ENCODE measurements at regions of chr10 and their contacts with region 1.

Region 1: DNA sequence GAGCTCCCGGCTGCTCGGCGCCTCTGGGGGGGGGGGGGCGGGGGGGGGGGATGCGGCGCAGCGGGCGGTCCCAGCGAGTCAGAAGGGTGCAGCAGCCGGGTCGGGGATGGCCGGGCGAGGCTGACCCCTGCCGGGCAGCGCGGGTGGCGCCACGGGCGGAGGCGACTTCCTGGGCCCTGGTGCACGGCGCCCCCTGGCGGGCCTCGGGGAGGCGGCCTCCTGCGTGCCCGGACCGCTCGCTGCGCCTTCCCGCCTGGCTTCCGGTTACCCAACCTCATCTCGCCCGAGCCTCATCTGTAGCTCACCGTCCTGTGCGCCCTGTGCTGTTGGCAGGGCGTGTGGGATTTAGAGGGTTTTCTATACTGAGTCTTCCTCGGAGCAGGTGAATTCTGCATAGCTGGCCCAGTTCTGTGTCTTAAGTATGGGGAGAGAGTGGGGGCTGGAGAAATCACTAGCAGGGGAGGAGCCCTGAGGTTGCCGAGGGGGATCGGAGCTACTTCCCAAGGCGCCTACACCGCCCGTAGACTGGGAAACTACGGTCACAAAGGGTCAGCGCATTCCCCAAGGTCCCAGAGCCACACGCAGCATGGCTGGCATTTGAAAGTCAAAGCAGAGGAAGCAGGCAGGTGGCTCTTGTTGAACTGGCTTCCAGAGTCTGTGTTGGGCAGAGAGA is 28.3 kb upstream of the WDFY4 start:
- DNase-seq: peak; percentile 99
- ATAC-seq: peak; percentile 93
- H3K4me3 Mint-ChIP-seq: peak overlapping the region; percentile 81
- H3K27ac Mint-ChIP-seq: no peak overlapping the region
- H3K4me1 Mint-ChIP-seq: peaks cover 48% of the 10 kb centered on the region
- H3K27me3 Mint-ChIP-seq: peaks cover 6% of the 10 kb centered on the region
- CTCF ChIP-seq: peak; percentile 97

Region 2: GRCh38 chr10:48557511-48558123 is 98.8 kb before region 1 on chr10:
- CTCF ChIA-PET with region 1: interaction called, 301 read pairs
- POLR2A ChIA-PET with region 1: interaction called, 9 read pairs
- intact Hi-C with region 1: loop called (anchors 1 kb)
- DNase-seq: no peak
- ATAC-seq: no peak
- H3K4me3 Mint-ChIP-seq: no peak overlapping the region
- H3K27ac Mint-ChIP-seq: no peak overlapping the region
- H3K4me1 Mint-ChIP-seq: peaks cover 1% of the 10 kb centered on the region
- H3K27me3 Mint-ChIP-seq: no peaks in the 10 kb centered on the region
- CTCF ChIP-seq: no peak

Region 3: GRCh38 chr10:48634198-48634983 is 22.0 kb before region 1 on chr10:
- CTCF ChIA-PET with region 1: interaction called, 15 read pairs
- POLR2A ChIA-PET with region 1: interaction called, 5 read pairs
- intact Hi-C with region 1: loop called (anchors 2 kb)
- DNase-seq: peak; percentile 67
- ATAC-seq: peak; percentile 100
- H3K4me3 Mint-ChIP-seq: peak overlapping the region; percentile 71
- H3K27ac Mint-ChIP-seq: peak overlapping the region; percentile 74
- H3K4me1 Mint-ChIP-seq: peaks cover 45% of the 10 kb centered on the region
- H3K27me3 Mint-ChIP-seq: peaks cover 17% of the 10 kb centered on the region
- CTCF ChIP-seq: no peak

Region 4: GRCh38 chr10:48708144-48708543 is 51.8 kb after region 1 on chr10:
- CTCF ChIA-PET with region 1: interaction called, 228 read pairs
- POLR2A ChIA-PET with region 1: interaction called, 5 read pairs
- intact Hi-C with region 1: no loop called
- DNase-seq: no peak
- ATAC-seq: no peak
- H3K4me3 Mint-ChIP-seq: no peak overlapping the region
- H3K27ac Mint-ChIP-seq: peak overlapping the region; percentile 30
- H3K4me1 Mint-ChIP-seq: peaks cover 82% of the 10 kb centered on the region
- H3K27me3 Mint-ChIP-seq: no peaks in the 10 kb centered on the region
- CTCF ChIP-seq: no peak

Region 5: DNA sequence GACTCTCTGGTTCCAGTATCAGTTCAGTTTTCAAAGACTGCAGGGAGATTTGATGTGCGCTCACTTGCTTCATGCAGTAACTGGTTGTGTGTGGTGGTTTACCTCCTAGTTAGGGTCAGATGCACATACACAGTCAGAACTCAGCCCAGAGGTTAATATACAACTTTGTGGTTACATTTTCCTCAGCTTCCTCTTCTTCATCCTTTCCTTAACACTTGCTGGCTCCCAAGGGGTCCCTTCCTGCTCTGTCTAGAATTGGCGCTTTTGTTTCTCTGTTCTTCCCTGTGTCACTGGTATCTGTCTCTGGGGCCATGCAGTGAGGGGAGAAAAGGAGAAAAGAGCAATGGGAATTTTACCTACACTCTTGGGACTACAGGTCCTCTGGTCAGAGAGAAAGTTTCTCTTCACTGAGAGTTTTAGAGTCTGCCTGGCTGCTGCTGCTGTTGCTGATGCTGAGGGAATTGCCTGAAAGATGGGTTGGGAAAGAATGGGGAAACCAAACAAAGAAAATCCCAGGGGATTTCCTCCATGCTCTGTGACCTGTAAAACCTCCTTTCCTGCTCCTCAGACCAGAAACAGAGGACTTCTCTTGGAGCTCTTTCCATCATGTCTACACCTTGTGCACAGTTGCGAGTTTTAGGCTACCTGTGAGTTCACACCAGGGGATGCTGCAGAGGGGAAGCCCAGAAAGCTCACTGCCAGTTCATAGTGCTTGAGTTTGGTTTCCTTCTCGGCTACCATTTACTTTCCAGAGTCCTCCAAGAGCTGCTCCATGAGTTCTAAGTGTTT is 102.9 kb after region 1 on chr10:
- CTCF ChIA-PET with region 1: interaction called, 35 read pairs
- POLR2A ChIA-PET with region 1: no interaction called
- intact Hi-C with region 1: loop called (anchors 2 kb)
- DNase-seq: no peak
- ATAC-seq: peak; percentile 87
- H3K4me3 Mint-ChIP-seq: peak overlapping the region; percentile 11
- H3K27ac Mint-ChIP-seq: peak overlapping the region; percentile 71
- H3K4me1 Mint-ChIP-seq: peaks cover 58% of the 10 kb centered on the region
- H3K27me3 Mint-ChIP-seq: no peaks in the 10 kb centered on the region
- CTCF ChIP-seq: no peak

Region 6: GRCh38 chr10:48981310-48981907 is 325.0 kb after region 1 on chr10:
- CTCF ChIA-PET with region 1: no interaction called
- POLR2A ChIA-PET with region 1: no interaction called
- intact Hi-C with region 1: loop called (anchors 5 kb)
- DNase-seq: peak; percentile 28
- ATAC-seq: peak; percentile 37
- H3K4me3 Mint-ChIP-seq: no peak overlapping the region
- H3K27ac Mint-ChIP-seq: peak overlapping the region; percentile 56
- H3K4me1 Mint-ChIP-seq: no peaks in the 10 kb centered on the region
- H3K27me3 Mint-ChIP-seq: no peaks in the 10 kb centered on the region
- CTCF ChIP-seq: peak; percentile 23

Region 7: DNA sequence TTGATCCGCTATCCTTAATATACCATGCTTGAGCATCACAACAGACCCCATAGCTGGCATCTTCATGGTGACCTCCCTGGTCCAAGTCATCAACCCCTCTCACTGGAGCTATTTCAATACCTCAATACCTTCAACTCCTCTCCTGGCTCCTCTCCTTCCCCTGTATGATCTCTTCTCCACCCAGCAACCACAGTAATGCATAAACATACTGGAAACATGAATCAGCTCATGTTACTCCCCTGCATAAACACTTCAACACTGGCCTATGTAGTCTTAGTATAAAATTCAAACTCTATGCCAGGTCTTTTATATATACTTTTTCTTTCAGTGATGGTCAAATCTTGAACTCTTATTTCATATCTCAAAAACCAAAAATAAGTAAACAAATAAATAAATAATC is 563.7 kb after region 1 on chr10:
- CTCF ChIA-PET with region 1: no interaction called
- POLR2A ChIA-PET with region 1: no interaction called
- intact Hi-C with region 1: no loop called
- DNase-seq: no peak
- ATAC-seq: no peak
- H3K4me3 Mint-ChIP-seq: no peak overlapping the region
- H3K27ac Mint-ChIP-seq: no peak overlapping the region
- H3K4me1 Mint-ChIP-seq: peaks cover 2% of the 10 kb centered on the region
- H3K27me3 Mint-ChIP-seq: peaks cover 4% of the 10 kb centered on the region
- CTCF ChIP-seq: no peak

Measured in activated B cell treated with CpG ODN at 0.5 μM for 24 hours (primary cell).